ENCODE measurements at regions of chr7 and their contacts with region 1.

Region 1: GRCh38 chr7:2411815-2412586 is 8.6 kb downstream of the CHST12 start:
- DNase-seq: no peak

Region 2: GRCh38 chr7:2468227-2468626 is 56.2 kb after region 1 on chr7:
- intact Hi-C with region 1: loop called (anchors 2 kb)
- DNase-seq: no peak

Measured in cardiac septum (tissue), 1 donor.